ENCODE measurements at regions of chr6 and their contacts with region 1.

Region 1: GRCh38 chr6:26025894-26026832 is 61.1 kb upstream of the HFE start:
- DNase-seq: peak; percentile 96
- H3K4me3 Mint-ChIP-seq: peak overlapping the region; percentile 83
- H3K27ac Mint-ChIP-seq: peak overlapping the region; percentile 84
- H3K4me1 Mint-ChIP-seq: peaks cover 17% of the 10 kb centered on the region
- H3K27me3 Mint-ChIP-seq: no peaks in the 10 kb centered on the region
- CTCF ChIP-seq: peak; percentile 81

Region 2: DNA sequence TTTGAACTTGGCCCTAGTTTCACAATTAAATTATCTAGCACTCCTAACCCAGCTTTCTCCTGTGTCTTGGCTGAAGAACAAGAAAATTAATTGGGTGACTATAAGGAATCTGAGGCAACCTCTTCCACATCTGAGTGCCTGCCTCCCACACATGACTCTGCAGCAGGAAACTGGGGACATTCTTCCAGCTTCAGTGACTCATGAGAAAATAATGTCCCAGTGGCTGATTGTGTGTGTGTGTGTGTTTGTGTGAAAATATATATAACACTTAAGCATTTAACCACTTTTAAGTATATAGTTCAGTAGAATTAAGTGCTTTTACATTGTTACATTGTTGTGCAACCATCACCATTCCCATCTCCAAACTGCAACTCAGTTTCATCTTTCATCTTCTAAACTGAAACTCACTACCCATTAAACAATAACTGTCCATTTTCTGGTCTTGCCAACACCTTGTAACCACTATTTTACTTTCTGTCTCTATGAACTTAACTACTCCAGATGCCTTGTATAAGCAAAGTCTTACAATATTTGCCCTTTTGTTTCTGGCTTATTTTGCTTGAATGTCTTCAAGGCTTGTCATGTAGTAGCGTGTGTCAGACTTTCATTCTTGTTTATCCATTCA is 54.9 kb before region 1 on chr6:
- CTCF ChIA-PET with region 1: interaction called, 5 read pairs
- POLR2A ChIA-PET with region 1: interaction called, 18 read pairs
- intact Hi-C with region 1: no loop called
- DNase-seq: peak; percentile 83
- H3K4me3 Mint-ChIP-seq: peak overlapping the region; percentile 24
- H3K27ac Mint-ChIP-seq: peak overlapping the region; percentile 77
- H3K4me1 Mint-ChIP-seq: peaks cover 38% of the 10 kb centered on the region
- H3K27me3 Mint-ChIP-seq: no peaks in the 10 kb centered on the region
- CTCF ChIP-seq: no peak

Region 3: GRCh38 chr6:26045065-26045927 is 19.1 kb after region 1 on chr6:
- CTCF ChIA-PET with region 1: interaction called, 70 read pairs
- POLR2A ChIA-PET with region 1: interaction called, 1,354 read pairs
- intact Hi-C with region 1: no loop called
- DNase-seq: peak; percentile 95
- H3K4me3 Mint-ChIP-seq: peak overlapping the region; percentile 80
- H3K27ac Mint-ChIP-seq: peak overlapping the region; percentile 86
- H3K4me1 Mint-ChIP-seq: peaks cover 16% of the 10 kb centered on the region
- H3K27me3 Mint-ChIP-seq: no peaks in the 10 kb centered on the region
- CTCF ChIP-seq: no peak

Region 4: DNA sequence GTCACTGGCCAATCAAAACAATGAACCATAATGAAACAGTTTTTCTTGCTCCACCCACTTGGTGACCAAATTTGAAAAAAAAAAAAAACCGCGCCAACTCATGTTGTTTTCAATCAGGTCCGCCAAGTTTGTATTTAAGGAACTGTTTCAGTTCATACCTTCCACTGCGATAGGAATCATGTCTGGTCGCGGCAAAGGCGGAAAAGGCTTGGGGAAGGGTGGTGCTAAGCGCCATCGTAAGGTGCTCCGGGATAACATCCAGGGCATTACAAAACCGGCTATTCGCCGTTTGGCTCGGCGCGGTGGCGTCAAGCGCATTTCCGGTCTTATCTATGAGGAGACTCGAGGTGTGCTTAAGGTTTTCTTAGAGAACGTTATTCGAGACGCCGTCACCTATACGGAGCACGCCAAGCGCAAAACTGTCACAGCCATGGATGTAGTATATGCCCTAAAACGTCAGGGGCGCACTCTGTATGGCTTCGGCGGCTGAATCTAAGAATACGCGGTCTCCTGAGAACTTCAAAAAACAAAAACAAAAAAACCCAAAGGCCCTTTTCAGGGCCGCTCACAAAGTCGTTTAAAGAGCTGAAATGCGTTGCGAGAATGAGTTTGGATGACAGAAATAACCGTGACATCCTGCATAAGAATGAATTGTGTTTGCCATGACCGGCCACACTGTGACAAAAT is 77.8 kb after region 1 on chr6:
- CTCF ChIA-PET with region 1: interaction called, 6 read pairs
- POLR2A ChIA-PET with region 1: interaction called, 51 read pairs
- intact Hi-C with region 1: no loop called
- DNase-seq: peak; percentile 96
- H3K4me3 Mint-ChIP-seq: peak overlapping the region; percentile 75
- H3K27ac Mint-ChIP-seq: peak overlapping the region; percentile 92
- H3K4me1 Mint-ChIP-seq: peaks cover 11% of the 10 kb centered on the region
- H3K27me3 Mint-ChIP-seq: no peaks in the 10 kb centered on the region
- CTCF ChIP-seq: peak; percentile 41

Region 5: GRCh38 chr6:26204332-26205165 is 178.4 kb after region 1 on chr6:
- CTCF ChIA-PET with region 1: interaction called, 4 read pairs
- POLR2A ChIA-PET with region 1: interaction called, 238 read pairs
- intact Hi-C with region 1: no loop called
- DNase-seq: peak; percentile 98
- H3K4me3 Mint-ChIP-seq: no peak overlapping the region
- H3K27ac Mint-ChIP-seq: no peak overlapping the region
- H3K4me1 Mint-ChIP-seq: peaks cover 3% of the 10 kb centered on the region
- H3K27me3 Mint-ChIP-seq: no peaks in the 10 kb centered on the region
- CTCF ChIP-seq: no peak

Region 6: GRCh38 chr6:27132532-27133280 is 1106.5 kb after region 1 on chr6:
- CTCF ChIA-PET with region 1: no interaction called
- POLR2A ChIA-PET with region 1: interaction called, 25 read pairs
- intact Hi-C with region 1: no loop called
- DNase-seq: peak; percentile 99
- H3K4me3 Mint-ChIP-seq: no peak overlapping the region
- H3K27ac Mint-ChIP-seq: no peak overlapping the region
- H3K4me1 Mint-ChIP-seq: peaks cover 11% of the 10 kb centered on the region
- H3K27me3 Mint-ChIP-seq: no peaks in the 10 kb centered on the region
- CTCF ChIP-seq: no peak

Region 7: DNA sequence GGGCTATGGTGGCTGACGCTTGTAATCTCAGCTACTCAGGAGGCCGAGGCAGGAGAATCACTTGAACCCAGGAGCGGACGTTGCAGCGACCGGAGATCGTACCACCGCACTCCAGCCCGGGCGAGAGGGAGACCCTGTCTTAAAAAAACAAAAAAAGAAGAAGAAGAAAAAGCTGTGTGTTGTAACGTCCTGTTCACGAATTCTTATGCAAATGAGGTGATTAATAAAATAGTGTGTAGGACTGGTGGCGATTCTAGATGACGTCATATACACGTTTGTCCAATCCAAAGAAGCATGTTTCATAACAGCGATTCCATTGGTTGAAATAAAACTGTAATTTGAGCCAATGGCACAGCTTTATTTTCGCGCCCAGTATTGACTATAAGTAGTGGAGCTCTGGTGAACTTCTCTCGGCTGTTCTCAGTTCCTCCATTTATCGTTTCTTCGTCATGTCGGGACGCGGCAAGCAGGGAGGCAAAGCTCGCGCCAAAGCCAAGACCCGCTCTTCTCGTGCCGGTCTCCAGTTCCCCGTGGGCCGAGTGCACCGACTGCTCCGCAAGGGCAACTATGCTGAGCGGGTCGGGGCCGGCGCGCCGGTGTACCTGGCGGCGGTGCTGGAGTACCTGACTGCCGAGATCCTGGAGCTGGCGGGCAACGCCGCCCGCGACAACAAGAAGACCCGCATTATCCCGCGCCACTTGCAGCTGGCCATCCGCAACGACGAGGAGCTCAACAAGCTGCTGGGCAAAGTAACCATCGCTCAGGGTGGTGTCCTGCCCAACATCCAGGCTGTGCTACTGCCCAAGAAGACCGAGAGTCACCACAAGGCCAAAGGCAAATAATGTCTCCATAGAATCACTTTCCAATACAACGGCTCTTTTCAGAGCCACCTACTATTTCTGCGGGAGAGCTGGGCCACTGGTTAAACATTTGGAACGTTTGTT is 1839.0 kb after region 1 on chr6:
- CTCF ChIA-PET with region 1: interaction called, 3 read pairs
- POLR2A ChIA-PET with region 1: interaction called, 28 read pairs
- intact Hi-C with region 1: no loop called
- DNase-seq: peak; percentile 96
- H3K4me3 Mint-ChIP-seq: peak overlapping the region; percentile 91
- H3K27ac Mint-ChIP-seq: peak overlapping the region; percentile 97
- H3K4me1 Mint-ChIP-seq: no peaks in the 10 kb centered on the region
- H3K27me3 Mint-ChIP-seq: no peaks in the 10 kb centered on the region
- CTCF ChIP-seq: no peak